Activated T-helper 1 cell treated with anti-CD3 and anti-CD28 coated beads, Interleukin-12 subunit alpha, Interleukin-12 subunit beta, Interleukin-2, Interleukin-4 antibody, amounts not matched to agents 30 ng/mL and 10 ng/mL and 1 ng/mL, durations not matched to agents 14 hours and 24 hours and 36 hours (primary cell): ENCODE measurements at regions of chr12 and their contacts with region 1.

Region 1: DNA sequence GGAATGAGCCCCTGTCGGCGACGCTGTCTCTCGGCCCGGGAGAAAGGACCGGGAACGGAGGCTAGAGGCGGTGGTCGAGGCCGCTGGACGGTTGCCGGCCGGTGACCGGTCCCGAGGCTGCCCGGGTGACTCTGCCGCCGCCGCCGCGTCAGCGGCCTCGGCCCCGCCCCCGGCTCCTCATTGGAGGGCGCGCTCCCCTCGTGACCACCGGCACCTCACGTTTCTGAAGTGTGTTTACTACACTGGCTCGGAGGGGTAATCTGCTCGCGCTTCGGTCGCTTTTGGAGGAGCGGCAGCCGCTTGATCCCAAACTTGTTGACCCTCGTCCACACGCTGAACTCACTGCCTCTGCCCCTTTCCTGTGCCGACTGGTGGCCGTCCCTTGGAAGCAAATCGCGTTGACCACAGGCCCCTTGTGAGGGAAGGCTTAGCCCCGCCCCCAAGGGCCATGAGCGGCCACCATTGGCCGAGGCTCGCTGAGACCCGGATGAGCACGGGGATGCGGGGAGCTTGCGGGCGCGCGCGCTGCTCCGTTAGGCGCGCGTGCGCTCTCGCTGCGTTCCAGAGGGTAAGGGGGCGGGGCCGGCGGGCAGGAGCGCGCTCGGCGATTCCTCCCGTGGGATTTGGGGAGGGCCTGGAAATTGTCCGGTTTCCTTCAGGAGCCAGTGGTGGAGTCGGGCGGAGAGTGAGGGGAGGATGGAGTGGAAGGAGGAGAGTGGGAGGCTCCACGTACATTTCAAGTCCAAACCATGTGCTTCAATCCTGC is at the start of gene CRY1:
- DNase-seq: peak; percentile 89
- H3K4me3 Mint-ChIP-seq: no peak within 1 kb of the TSS
- H3K27ac Mint-ChIP-seq: no peak within 1 kb of the TSS
- H3K4me1 Mint-ChIP-seq: peaks cover 13% of the 10 kb centered on the region
- H3K27me3 Mint-ChIP-seq: peaks cover 10% of the 10 kb centered on the region
- total RNA-seq, gene CRY1: 23.4 and 23.5 TPM in 2 replicates

Region 2: DNA sequence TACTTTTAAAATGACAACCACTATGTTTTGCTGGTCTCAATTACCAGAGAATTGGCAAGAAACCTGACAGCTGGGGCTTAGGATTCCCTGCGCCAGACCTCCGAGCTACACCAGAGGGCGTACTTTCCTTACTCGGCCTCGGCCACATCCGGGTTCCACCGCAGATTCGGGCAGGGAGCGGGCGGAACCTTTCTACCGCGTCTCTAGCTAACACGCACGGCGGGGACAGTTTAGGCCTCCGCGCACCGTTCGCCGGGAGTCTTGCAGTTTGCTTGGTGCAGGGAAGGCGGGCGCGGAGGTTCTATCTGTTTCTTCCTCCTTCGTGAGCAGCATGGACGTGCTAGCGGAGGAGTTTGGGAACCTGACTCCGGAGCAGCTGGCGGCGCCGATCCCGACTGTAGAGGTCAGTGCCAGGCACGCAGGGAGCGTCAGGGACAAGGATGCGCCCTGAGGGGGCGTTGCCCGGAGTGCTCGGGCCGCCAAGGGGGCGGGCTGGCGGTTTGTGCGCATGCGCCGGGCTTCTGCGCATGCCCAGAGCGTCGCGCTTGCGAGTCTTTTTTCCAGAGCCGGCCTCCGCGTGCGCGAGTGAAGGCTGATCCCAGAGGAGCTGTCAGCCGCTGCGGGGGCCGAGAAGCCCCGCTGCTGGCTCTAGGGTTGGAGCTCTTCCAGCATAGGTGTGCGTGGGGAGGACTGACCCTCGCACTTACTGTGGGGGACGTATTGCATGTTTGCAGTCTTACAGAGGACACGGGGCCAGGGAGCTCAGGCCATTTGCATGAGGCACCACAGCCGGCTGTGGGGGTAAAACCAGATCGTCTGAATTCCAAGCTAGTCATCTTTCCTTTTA is 735.8 kb before region 1 on chr12 and contains the start of gene POLR3B:
- intact Hi-C with region 1: loop called (anchors 1 kb)
- DNase-seq: peak; percentile 94
- H3K4me3 Mint-ChIP-seq: peak within 1 kb of the TSS; percentile 85
- H3K27ac Mint-ChIP-seq: peak within 1 kb of the TSS; percentile 79
- H3K4me1 Mint-ChIP-seq: peaks cover 16% of the 10 kb centered on the region
- H3K27me3 Mint-ChIP-seq: no peaks in the 10 kb centered on the region
- total RNA-seq, gene POLR3B: 11.5 and 14.3 TPM in 2 replicates

Region 3: GRCh38 chr12:106955377-106956047 is 138.1 kb before region 1 on chr12 and contains the start of gene TMEM263:
- intact Hi-C with region 1: loop called (anchors 1 kb)
- DNase-seq: peak; percentile 90
- H3K4me3 Mint-ChIP-seq: peak within 1 kb of the TSS; percentile 97
- H3K27ac Mint-ChIP-seq: peak within 1 kb of the TSS; percentile 94
- H3K4me1 Mint-ChIP-seq: peaks cover 21% of the 10 kb centered on the region
- H3K27me3 Mint-ChIP-seq: peaks cover 3% of the 10 kb centered on the region
- total RNA-seq, gene TMEM263: 25.5 and 25.9 TPM in 2 replicates

Region 4: DNA sequence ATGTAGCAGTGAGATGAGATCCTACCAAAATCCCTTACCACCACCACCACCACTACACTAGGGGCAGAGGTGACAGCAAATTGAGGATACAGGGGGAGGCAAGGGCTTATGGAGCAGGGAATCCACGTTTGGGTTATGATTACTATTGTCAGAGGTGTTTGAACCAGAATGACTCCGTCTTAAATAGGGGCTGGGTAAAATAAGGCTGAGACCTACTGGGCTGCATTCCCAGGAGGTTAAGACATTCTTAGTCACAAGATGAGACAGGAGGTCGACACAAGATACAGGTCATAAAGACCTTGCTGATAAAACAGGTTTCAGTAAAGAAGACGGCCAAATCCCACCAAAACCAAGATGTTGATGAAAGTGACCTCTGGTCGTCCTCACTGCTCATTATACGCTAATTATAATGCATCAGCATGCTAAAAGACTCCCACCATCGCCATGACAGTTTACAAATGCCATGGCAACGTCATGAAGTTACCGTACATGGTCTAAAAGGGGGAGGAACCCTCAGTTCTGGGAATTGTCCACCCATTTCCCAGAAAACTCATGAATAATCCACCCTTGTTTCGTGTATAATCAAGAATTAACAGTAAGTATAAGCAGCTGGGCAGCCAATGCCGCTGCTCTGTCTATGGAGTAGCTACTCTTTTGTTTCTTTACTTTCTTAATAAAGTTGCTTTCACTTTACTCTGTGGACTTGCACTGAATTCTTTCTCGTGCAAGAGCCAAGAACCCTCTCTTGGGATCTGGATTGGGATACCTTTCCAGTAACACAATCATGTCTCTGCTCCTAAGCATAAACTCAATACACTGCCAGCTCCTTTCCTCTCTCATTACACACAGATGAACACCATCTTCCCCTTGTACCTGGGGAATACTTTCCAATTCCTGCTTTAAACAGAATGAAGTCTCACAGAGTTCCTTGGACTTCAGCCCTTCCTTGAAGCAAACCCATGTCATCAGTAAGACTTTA is 16.4 kb after region 1 on chr12:
- intact Hi-C with region 1: no loop called
- DNase-seq: no peak
- H3K4me3 Mint-ChIP-seq: no peak overlapping the region
- H3K27ac Mint-ChIP-seq: no peak overlapping the region
- H3K4me1 Mint-ChIP-seq: no peaks in the 10 kb centered on the region
- H3K27me3 Mint-ChIP-seq: peaks cover 29% of the 10 kb centered on the region

Region 5: GRCh38 chr12:107317751-107318613 is 224.4 kb after region 1 on chr12:
- intact Hi-C with region 1: loop called (anchors 1 kb)
- DNase-seq: peak; percentile 86
- H3K4me3 Mint-ChIP-seq: peak overlapping the region; percentile 85
- H3K27ac Mint-ChIP-seq: peak overlapping the region; percentile 30
- H3K4me1 Mint-ChIP-seq: peaks cover 32% of the 10 kb centered on the region
- H3K27me3 Mint-ChIP-seq: peaks cover 19% of the 10 kb centered on the region

Region 6: GRCh38 chr12:107607464-107608392 is 514.1 kb after region 1 on chr12:
- intact Hi-C with region 1: loop called (anchors 1 kb)
- DNase-seq: peak; percentile 55
- H3K4me3 Mint-ChIP-seq: no peak overlapping the region
- H3K27ac Mint-ChIP-seq: no peak overlapping the region
- H3K4me1 Mint-ChIP-seq: no peaks in the 10 kb centered on the region
- H3K27me3 Mint-ChIP-seq: no peaks in the 10 kb centered on the region

Region 7: DNA sequence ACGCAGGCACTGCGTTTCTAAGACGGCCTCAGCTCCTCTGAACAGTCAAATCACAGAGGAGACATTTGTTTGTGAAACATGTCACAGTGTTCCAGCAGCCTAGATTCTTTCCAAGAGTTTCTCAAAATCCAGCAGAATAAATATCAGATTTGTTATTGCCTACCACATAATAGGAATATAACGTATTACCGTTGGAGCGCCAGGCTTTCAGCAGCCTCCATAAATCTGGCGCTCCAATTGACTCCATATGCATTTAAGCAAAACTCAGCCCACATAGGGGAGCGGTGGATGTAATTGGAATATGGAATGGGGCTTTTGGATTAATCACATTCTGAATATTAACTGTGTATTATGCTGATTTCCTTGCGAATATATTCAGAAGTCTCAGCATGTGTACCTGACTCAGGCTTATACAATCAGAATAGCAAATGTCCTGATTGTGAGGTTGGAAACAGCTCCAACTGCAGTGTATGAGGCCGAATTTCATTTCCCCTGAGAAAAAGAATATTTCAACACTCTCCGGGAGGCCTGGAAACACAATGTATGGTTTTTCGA is 854.9 kb after region 1 on chr12:
- intact Hi-C with region 1: no loop called
- DNase-seq: no peak
- H3K4me3 Mint-ChIP-seq: no peak overlapping the region
- H3K27ac Mint-ChIP-seq: no peak overlapping the region
- H3K4me1 Mint-ChIP-seq: no peaks in the 10 kb centered on the region
- H3K27me3 Mint-ChIP-seq: peaks cover 7% of the 10 kb centered on the region